ENCODE measurements at regions of chr6 and their contacts with region 1.

Region 1: GRCh38 chr6:31441365-31442267 is 38.2 kb downstream of the MICA start:
- DNase-seq: peak; percentile 75 to 85
- H3K4me3 ChIP-seq: no peak overlapping the region
- H3K4me3 Mint-ChIP-seq: no peak overlapping the region
- H3K27ac Mint-ChIP-seq: no peak overlapping the region
- H3K4me1 ChIP-seq: 0 out of 2 replicates have a peak, but pooled peaks cover 2% of the 10 kb centered on the region
- H3K4me1 Mint-ChIP-seq: no peaks in the 10 kb centered on the region
- H3K27me3 ChIP-seq: no peaks in the 10 kb centered on the region
- H3K27me3 Mint-ChIP-seq: peaks cover 22% of the 10 kb centered on the region
- CTCF ChIP-seq: peak; percentile 88

Region 2: DNA sequence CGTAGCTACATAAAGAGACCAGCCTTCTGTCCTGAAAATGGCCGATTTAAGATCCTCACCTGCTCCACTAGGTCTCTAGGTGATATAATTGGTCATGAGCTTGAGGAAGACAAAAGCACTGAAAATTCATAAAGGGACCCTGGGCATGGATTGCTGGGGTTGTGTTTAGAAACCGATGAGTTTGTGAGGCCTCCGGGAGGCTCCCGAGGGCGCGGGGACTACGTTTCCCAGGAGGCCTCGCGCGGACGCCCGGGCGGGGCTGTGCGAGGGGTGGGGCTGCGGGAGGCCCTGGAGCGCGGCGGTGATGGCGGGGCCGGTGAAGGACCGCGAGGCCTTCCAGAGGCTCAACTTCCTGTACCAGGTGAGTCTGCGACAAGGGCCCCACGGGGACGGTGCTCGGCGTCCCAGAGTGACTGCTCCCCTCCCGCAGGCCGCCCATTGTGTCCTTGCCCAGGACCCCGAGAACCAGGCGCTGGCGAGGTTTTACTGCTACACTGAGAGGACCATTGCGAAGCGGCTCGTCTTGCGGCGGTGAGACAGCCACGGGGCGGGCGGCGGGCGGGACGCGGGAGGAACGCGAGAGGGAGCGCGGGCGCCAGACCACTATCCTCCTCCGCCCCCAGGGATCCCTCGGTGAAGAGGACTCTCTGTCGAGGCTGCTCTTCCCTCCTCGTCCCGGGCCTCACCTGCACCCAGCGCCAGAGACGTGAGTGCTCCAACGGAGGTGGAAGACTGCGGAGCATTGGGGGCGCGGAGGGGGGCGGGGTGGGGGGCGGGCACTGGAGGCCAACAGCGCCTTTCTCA is 1096.5 kb before region 1 on chr6 and contains the start of gene RPP21:
- CTCF ChIA-PET with region 1: no interaction called
- POLR2A ChIA-PET with region 1: no interaction called
- intact Hi-C with region 1: no loop called
- DNase-seq: peak; percentile 85 to 91
- H3K4me3 ChIP-seq: peak within 1 kb of the TSS; percentile 98
- H3K4me3 Mint-ChIP-seq: peak within 1 kb of the TSS; percentile 78
- H3K27ac Mint-ChIP-seq: peak within 1 kb of the TSS; percentile 65
- H3K4me1 ChIP-seq: no peaks in the 10 kb centered on the region
- H3K4me1 Mint-ChIP-seq: peaks cover 6% of the 10 kb centered on the region
- H3K27me3 ChIP-seq: no peaks in the 10 kb centered on the region
- H3K27me3 Mint-ChIP-seq: no peaks in the 10 kb centered on the region
- CTCF ChIP-seq: no peak
- total RNA-seq, gene RPP21: 44.2 and 47.5 TPM in 2 replicates

Region 3: DNA sequence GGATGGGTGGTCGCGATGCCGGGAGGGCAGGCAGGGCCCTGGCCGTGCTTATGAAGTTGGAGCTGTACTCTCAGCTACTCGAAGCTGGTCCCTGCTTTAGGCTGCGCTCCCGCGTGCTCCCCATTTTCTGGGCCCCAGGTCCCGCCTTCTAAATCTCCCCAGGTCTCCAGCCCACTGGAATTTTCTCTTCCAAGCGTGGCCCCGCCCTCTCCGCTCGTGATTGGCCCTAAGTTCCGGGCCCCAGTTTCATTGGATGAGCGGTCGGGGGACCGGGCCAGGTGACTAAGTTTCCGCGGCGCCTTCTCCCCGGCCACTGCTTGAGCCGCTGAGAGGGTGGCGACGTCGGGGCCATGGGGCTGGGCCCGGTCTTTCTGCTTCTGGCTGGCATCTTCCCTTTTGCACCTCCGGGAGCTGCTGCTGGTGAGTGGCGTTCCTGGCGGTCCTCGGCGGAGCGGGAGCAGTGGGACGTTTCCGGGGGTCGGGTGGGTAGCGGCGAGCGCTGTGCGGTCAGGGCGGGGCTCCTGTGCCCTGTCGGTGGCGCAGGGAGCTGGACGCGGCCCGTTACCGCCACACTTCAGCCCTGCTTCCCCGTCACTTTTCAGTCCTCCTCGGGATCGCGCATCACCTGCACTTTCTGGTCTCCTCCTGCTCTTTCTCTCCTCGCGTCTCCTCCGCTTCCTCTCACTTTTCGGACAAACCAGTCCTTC is 38.2 kb before region 1 on chr6 and contains the start of gene MICA:
- CTCF ChIA-PET with region 1: interaction called, 5 read pairs
- POLR2A ChIA-PET with region 1: no interaction called
- intact Hi-C with region 1: loop called (anchors 1 kb)
- DNase-seq: peak; percentile 91 to 93
- H3K4me3 ChIP-seq: peak within 1 kb of the TSS; percentile 56
- H3K4me3 Mint-ChIP-seq: peak within 1 kb of the TSS; percentile 89
- H3K27ac Mint-ChIP-seq: peak within 1 kb of the TSS; percentile 33
- H3K4me1 ChIP-seq: peaks cover 6% of the 10 kb centered on the region
- H3K4me1 Mint-ChIP-seq: peaks cover 36% of the 10 kb centered on the region
- H3K27me3 ChIP-seq: no peaks in the 10 kb centered on the region
- H3K27me3 Mint-ChIP-seq: no peaks in the 10 kb centered on the region
- CTCF ChIP-seq: no peak
- total RNA-seq, gene MICA: 12.6 and 13.1 TPM in 2 replicates

Region 4: GRCh38 chr6:31479933-31480535 is 38.4 kb after region 1 on chr6:
- CTCF ChIA-PET with region 1: no interaction called
- POLR2A ChIA-PET with region 1: no interaction called
- intact Hi-C with region 1: loop called (anchors 5 kb)
- DNase-seq: no peak
- H3K4me3 ChIP-seq: no peak overlapping the region
- H3K4me3 Mint-ChIP-seq: no peak overlapping the region
- H3K27ac Mint-ChIP-seq: no peak overlapping the region
- H3K4me1 ChIP-seq: no peaks in the 10 kb centered on the region
- H3K4me1 Mint-ChIP-seq: no peaks in the 10 kb centered on the region
- H3K27me3 ChIP-seq: no peaks in the 10 kb centered on the region; the same call in 1 of the 2 replicates
- H3K27me3 Mint-ChIP-seq: peaks cover 11% of the 10 kb centered on the region
- CTCF ChIP-seq: no peak

Measured in Caco-2 (cell line).